ENCODE measurements at regions of chr15 and their contacts with region 1.

Region 1: DNA sequence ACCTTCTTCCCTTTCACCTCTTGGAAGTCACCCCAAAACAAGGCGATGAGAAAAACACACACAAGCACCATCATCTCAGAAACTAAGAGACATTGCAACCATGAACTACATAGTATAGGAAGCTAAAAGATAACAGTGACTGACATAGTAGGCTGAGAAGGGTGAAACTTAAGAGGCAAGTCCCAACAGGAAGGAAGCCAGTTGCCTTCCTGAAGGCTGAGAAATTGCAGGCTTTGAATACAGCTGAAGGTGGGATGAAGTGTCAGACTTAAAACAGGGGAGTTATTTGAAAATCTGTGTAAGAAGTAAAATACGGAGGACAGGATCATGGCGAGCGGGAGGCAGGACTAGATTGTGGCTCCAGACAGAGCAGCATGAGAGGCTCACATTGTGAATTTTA is 27.8 kb downstream of the SLC27A2 start:
- DNase-seq: no peak
- ATAC-seq: no peak
- H3K4me3 ChIP-seq: no peak overlapping the region
- H3K27ac ChIP-seq: no peak overlapping the region
- H3K4me1 ChIP-seq: no peaks in the 10 kb centered on the region
- H3K27me3 ChIP-seq: peaks cover 0 to 8% (median 0%) of the 10 kb centered on the region in 9 donors
- CTCF ChIP-seq: no peak
- POLR2A ChIP-seq: no peak

Region 2: DNA sequence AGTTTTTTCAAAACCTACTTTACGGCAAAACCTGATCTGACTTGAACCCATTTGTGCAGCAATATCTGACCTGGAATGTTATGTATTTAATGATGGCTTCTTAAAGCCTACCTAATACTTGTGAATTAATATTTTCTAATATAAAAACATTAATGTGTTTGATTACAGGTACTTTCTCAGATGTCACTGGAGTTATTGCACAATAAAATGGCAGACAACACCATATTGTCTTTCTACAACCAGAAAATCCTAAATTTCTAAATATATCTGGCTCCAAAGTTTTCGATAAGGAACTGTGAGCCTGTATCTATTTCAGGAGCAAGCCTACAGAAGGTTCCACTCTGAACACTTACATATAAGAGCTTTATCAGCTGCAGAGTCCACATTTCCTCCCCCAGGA is 275.3 kb before region 1 on chr15:
- intact Hi-C with region 1: loop called in 1 of 10 experiments (anchors 5 kb)
- DNase-seq: no peak
- ATAC-seq: no peak
- H3K4me3 ChIP-seq: no peak overlapping the region
- H3K27ac ChIP-seq: no peak overlapping the region
- H3K4me1 ChIP-seq: peaks cover 0 to 14% (median 0%) of the 10 kb centered on the region in 12 donors
- H3K27me3 ChIP-seq: no peaks in the 10 kb centered on the region
- CTCF ChIP-seq: no peak
- POLR2A ChIP-seq: no peak

Region 3: GRCh38 chr15:50166216-50166615 is 43.6 kb before region 1 on chr15:
- intact Hi-C with region 1: no loop called
- DNase-seq: no peak
- ATAC-seq: peak in 1 of 4 donors; percentile 59
- H3K4me3 ChIP-seq: no peak overlapping the region
- H3K27ac ChIP-seq: no peak overlapping the region
- H3K4me1 ChIP-seq: no peaks in the 10 kb centered on the region
- H3K27me3 ChIP-seq: no peaks in the 10 kb centered on the region
- CTCF ChIP-seq: no peak
- POLR2A ChIP-seq: no peak

Measured in heart left ventricle (tissue), 16 donors.